Tibial artery (tissue), 4 donors: ENCODE measurements at regions of chr1 and their contacts with region 1.

Region 1: DNA sequence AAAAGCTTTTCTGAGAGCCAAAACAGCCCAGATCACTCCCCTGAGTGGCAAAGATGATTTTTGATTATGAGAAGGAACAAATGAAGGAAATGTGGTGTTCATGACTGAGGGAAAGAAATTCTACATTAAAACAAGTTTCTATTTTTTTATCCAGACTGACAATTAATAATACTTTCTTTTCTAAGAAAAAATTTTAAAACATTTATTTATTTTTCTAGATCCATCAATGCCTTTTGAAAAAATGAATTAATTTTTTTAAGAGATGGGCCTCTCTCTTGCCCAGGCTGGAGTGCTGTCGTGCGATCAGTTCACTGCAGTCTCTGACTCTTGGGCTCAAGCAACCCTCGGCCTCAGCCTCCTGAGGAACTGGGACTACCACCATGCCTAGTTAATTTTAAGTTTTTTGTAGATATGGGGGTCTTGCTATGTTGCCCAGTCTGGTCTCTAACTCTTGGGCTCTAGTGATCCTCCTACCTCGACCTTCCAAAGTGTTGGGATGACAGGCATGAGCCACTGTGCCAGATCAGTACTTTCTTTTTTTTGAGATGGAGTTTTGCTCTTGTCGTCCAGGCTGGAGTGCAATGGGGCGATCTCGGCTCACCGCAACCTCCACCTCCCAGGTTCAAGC is 11.2 kb upstream of the TXNIP start:
- DNase-seq: no peak
- H3K4me3 ChIP-seq: no peak overlapping the region
- H3K27ac ChIP-seq: peak overlapping the region; percentile 64 to 73
- H3K4me1 ChIP-seq: peaks cover 0 to 23% (median 13%) of the 10 kb centered on the region in 4 donors
- H3K27me3 ChIP-seq: no peaks in the 10 kb centered on the region
- CTCF ChIP-seq: no peak

Region 2: DNA sequence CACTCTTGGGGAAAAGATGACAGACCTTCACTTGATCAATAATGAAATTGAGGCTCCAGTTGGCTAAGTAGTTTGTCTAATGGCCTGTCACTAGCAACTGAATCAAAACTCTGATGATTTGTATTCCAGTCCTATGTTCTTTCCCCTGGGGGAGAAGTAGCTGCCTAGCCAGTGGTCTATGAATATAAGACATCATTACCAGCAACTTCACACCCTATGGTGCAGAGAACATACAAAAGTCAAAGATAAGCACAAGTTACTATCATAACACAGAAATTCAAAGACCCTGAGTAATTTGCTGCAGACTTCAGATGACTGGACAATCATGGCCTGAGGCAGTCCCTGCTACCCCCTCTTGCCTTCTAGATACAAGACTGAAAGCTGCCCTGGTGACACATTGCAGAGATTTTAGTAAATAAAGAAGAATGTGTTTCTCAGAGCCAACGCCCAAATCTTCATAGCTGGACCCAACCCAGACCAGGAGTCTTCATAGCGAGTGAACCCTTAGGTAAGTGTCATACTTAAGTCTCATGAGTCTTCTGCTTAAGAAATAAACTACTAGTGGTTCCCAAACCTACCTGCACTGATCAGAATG is 301.4 kb before region 1 on chr1:
- intact Hi-C with region 1: no loop called
- DNase-seq: no peak
- H3K4me3 ChIP-seq: no peak overlapping the region
- H3K27ac ChIP-seq: no peak overlapping the region
- H3K4me1 ChIP-seq: no peaks in the 10 kb centered on the region
- H3K27me3 ChIP-seq: no peaks in the 10 kb centered on the region
- CTCF ChIP-seq: no peak

Region 3: DNA sequence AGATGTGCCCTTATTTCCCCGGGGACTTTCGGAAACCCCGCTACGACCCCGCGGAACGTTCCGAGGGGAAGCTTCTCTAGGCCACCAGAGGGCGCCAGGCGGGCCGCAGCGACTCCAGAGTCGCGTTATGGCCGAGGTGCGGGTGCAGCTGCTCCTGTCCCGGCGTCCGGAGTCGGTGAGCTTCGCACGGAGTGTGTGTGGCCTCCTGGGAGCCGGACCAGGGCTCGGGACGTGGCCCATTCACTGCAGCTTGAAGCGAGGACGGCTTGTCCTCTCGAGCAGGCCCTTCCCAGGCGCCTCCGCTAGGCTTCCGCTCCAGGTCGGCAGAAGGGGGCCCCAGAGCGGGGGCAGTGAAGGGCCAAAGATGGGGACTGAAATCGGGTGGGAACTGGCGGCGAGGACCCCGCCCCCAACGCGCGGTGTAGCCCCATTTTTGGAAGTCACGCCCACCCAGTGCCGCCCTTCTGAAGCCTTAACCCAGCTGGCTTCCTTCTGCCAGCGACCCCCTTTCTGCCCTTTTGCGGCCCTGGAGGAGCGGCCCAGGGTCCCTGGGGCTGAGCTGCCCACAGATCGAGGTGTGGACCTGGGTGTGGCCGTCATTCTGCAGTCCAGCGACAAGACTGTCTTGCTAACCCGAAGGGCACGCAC is 162.0 kb before region 1 on chr1 and contains the start of gene NUDT17:
- intact Hi-C with region 1: no loop called
- DNase-seq: peak; percentile 67 to 86
- H3K4me3 ChIP-seq: peak within 1 kb of the TSS; percentile 54 to 70
- H3K27ac ChIP-seq: peak within 1 kb of the TSS; percentile 81 to 84
- H3K4me1 ChIP-seq: peaks cover 0 to 33% (median 28%) of the 10 kb centered on the region in 4 donors
- H3K27me3 ChIP-seq: no peaks in the 10 kb centered on the region
- CTCF ChIP-seq: peak; percentile 90 to 95

Region 4: GRCh38 chr1:145977486-145978470 is 29.8 kb before region 1 on chr1:
- intact Hi-C with region 1: loop called (anchors 2 kb)
- DNase-seq: peak; percentile 85 to 86
- H3K4me3 ChIP-seq: no peak overlapping the region
- H3K27ac ChIP-seq: peak overlapping the region; percentile 85 to 90
- H3K4me1 ChIP-seq: peaks cover 0 to 57% (median 50%) of the 10 kb centered on the region in 4 donors
- H3K27me3 ChIP-seq: no peaks in the 10 kb centered on the region
- CTCF ChIP-seq: peak; percentile 85 to 96